MCF 10A (cell line): ENCODE measurements at regions of chr2 and their contacts with region 1.

Region 1: GRCh38 chr2:56898986-56899385 is 715.2 kb downstream of the CCDC85A start:
- DNase-seq: no peak
- H3K4me3 Mint-ChIP-seq: no peak overlapping the region
- H3K27ac Mint-ChIP-seq: no peak overlapping the region
- H3K4me1 Mint-ChIP-seq: no peaks in the 10 kb centered on the region
- H3K27me3 Mint-ChIP-seq: no peaks in the 10 kb centered on the region
- CTCF ChIP-seq: no peak

Region 2: GRCh38 chr2:56918790-56919189 is 19.8 kb after region 1 on chr2:
- CTCF ChIA-PET with region 1: no interaction called
- POLR2A ChIA-PET with region 1: no interaction called
- intact Hi-C with region 1: loop called (anchors 1 kb)
- DNase-seq: no peak
- H3K4me3 Mint-ChIP-seq: no peak overlapping the region
- H3K27ac Mint-ChIP-seq: no peak overlapping the region
- H3K4me1 Mint-ChIP-seq: no peaks in the 10 kb centered on the region
- H3K27me3 Mint-ChIP-seq: no peaks in the 10 kb centered on the region
- CTCF ChIP-seq: no peak

Region 3: GRCh38 chr2:57080035-57080434 is 181.0 kb after region 1 on chr2:
- CTCF ChIA-PET with region 1: no interaction called
- POLR2A ChIA-PET with region 1: no interaction called
- intact Hi-C with region 1: no loop called
- DNase-seq: peak; percentile 62
- H3K4me3 Mint-ChIP-seq: no peak overlapping the region
- H3K27ac Mint-ChIP-seq: no peak overlapping the region
- H3K4me1 Mint-ChIP-seq: peaks cover 15% of the 10 kb centered on the region
- H3K27me3 Mint-ChIP-seq: no peaks in the 10 kb centered on the region
- CTCF ChIP-seq: no peak